CD14-positive monocyte (primary cell): ENCODE measurements at regions of chr1 and their contacts with region 1.

Region 1: DNA sequence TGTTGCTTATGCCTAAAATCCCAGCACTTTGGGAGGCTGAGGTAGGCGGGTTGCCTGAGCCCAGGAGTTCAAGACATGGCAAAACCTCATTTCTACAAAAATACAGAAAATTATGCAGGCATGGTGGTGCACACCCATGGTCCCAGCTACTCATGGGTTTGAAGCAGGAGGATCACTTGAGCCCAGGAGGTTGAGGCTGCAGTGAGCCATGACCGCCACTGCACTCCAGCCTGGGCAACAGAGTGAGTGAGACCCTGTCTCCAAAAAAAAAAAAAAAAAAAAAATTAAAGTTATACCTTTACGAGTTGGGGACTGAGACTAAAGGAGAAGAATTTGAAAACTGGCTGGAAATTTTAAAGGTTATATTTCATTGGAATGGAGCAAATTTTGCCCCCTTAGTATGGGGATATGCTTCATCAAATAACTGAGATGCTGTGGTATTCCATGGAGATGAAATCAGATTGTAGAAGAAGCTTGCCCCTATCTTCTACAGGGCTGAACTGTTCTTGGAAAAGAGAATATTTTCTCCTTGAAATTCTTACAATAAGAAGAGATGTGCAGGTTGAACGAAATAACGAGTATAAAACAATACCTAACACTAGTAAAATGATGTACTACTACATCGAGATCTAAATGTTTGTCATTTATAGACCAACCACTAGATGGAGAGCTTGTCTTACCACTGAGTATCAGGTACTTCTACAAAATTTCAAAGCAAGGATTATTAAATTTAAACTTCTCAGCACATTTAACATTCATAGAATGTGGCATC is 34.9 kb upstream of the SCYL3 start:
- DNase-seq: peak in 2 of 3 donors; percentile 24 to 40
- H3K4me3 ChIP-seq: no peak overlapping the region
- H3K4me3 Mint-ChIP-seq: no peak overlapping the region
- H3K27ac ChIP-seq: no peak overlapping the region
- H3K27ac Mint-ChIP-seq: no peak overlapping the region
- H3K4me1 ChIP-seq: no peaks in the 10 kb centered on the region
- H3K4me1 Mint-ChIP-seq: no peaks in the 10 kb centered on the region
- H3K27me3 ChIP-seq: no peaks in the 10 kb centered on the region
- H3K27me3 Mint-ChIP-seq: no peaks in the 10 kb centered on the region
- CTCF ChIP-seq: peak; percentile 79

Region 2: GRCh38 chr1:170929835-170930554 is 1001.4 kb after region 1 on chr1:
- intact Hi-C with region 1: loop called in 1 of 2 experiments (anchors 10 kb)
- DNase-seq: peak in 2 of 3 donors; percentile 4 to 7
- H3K4me3 ChIP-seq: no peak overlapping the region
- H3K4me3 Mint-ChIP-seq: no peak overlapping the region
- H3K27ac ChIP-seq: no peak overlapping the region
- H3K27ac Mint-ChIP-seq: no peak overlapping the region
- H3K4me1 ChIP-seq: no peaks in the 10 kb centered on the region
- H3K4me1 Mint-ChIP-seq: no peaks in the 10 kb centered on the region
- H3K27me3 ChIP-seq: no peaks in the 10 kb centered on the region
- H3K27me3 Mint-ChIP-seq: peaks cover 0 to 2% (median 1%) of the 10 kb centered on the region in 3 donors
- CTCF ChIP-seq: peak; percentile 76